ENCODE measurements at regions of chr7 and their contacts with region 1.

Region 1: GRCh38 chr7:80517282-80517747 is 5.5 kb upstream of the GNAT3 start:
- DNase-seq: peak in 1 of 5 donors; percentile 31
- ATAC-seq: peak; percentile 64 to 78 (median 70)
- H3K4me3 ChIP-seq: no peak overlapping the region
- H3K27ac ChIP-seq: peak overlapping the region in 7 of 12 donors; percentile 0 to 63 (median 31)
- H3K4me1 ChIP-seq: peaks cover 0 to 18% (median 13%) of the 10 kb centered on the region in 12 donors
- H3K27me3 ChIP-seq: no peaks in the 10 kb centered on the region
- CTCF ChIP-seq: peak in 8 of 12 donors; percentile 14 to 59 (median 34)
- POLR2A ChIP-seq: no peak

Region 2: DNA sequence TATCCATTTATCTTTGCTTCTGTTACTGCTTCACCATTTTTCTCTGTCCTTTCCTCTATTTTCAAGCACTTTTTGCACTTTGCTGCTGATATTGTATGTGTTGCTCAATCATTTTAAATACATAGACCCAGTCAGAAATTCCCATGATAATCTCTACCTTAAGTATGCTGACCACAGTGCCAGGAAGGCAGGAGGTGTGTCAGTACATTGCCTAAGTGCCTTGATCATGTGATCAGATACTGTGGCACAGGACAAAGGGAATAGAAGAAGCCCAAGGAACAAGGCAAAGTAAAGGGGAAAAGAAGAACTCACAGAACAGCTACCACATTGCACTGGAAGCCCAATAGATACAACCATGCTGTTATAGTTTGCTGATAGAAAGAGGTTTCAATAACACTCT is 67.5 kb after region 1 on chr7:
- intact Hi-C with region 1: loop called in 1 of 10 experiments (anchors 5 kb)
- DNase-seq: no peak
- ATAC-seq: peak in 2 of 4 donors; percentile 51 to 58
- H3K4me3 ChIP-seq: no peak overlapping the region
- H3K27ac ChIP-seq: peak overlapping the region in 6 of 12 donors; percentile 9 to 79 (median 70)
- H3K4me1 ChIP-seq: peaks cover 0 to 55% (median 25%) of the 10 kb centered on the region in 12 donors
- H3K27me3 ChIP-seq: no peaks in the 10 kb centered on the region
- CTCF ChIP-seq: no peak
- POLR2A ChIP-seq: no peak

Region 3: DNA sequence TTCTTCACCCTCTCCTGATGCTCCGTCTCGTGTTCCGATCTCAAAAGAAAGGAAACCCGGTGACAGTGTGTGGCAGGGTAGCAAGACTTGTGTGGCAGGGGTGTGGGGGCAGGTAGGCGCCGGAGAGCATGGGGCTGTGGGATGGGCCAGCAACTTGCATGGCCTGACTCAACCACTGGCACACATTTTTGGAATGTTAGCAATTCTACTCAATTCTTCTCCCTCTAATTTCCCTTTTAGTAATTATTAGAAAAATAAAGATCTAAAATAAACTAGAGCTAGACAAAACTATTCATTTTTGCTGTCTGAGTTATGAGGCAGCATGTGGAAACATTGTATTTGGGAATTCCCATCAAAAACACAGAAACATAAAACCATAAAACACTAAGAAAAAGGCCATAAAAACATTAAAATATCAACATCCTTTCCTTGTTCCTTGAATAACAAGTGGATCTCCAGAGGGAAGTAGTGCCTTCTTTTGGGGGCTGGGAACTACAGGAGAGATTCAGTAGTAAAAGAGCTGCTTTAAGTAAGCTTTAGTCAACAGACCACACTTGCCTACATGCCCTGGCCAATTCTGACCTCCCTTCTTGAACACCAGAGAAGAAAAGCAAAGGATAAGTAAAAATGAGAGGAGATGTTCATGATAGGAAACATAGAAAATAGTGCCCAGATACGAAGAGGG is 379.7 kb after region 1 on chr7:
- intact Hi-C with region 1: no loop called
- DNase-seq: no peak
- ATAC-seq: no peak
- H3K4me3 ChIP-seq: no peak overlapping the region
- H3K27ac ChIP-seq: peak overlapping the region in 1 of 12 donors; percentile 9
- H3K4me1 ChIP-seq: peaks cover 0 to 21% (median 0%) of the 10 kb centered on the region in 12 donors
- H3K27me3 ChIP-seq: no peaks in the 10 kb centered on the region
- CTCF ChIP-seq: no peak
- POLR2A ChIP-seq: no peak

Measured in heart left ventricle (tissue), 16 donors.